Dendritic cell treated with granulocyte-macrophage colony-stimulating factor and Interleukin-4, amounts not matched to agents 40 ng/mL and 50 ng/mL, for 4 days (primary cell): ENCODE measurements at regions of chr20 and their contacts with region 1.

Region 1: DNA sequence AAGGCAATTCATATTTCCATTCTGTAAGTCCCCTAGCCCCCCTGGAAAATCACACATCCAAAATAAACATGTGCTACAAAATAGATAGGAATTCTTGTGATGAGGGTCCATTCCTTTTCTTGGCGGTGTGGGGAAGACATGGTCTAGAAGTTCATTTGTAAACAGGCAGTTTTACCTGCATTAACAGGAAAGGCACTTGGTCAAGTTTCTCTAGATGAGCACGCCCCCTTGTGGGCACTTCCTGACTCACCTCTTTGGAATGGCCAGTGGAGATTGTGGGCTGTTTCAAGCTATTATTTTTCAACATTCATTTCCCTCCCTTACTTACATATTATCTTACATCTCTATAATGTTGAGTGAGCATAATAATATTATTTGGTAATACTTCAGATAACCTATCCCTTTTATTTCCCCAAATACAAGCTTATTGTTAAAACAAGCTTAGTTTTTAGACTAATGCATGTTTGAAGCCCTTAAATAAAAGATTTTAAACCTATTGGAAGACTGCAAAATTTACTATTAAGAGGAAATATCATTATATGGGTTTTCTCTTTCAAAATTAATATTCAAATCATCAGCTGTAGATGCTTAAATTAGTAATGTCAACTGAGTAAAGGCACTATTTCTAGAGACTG is 92.1 kb downstream of the TASP1 start:
- H3K4me3 Mint-ChIP-seq: no peak overlapping the region
- H3K27ac Mint-ChIP-seq: no peak overlapping the region
- H3K4me1 Mint-ChIP-seq: no peaks in the 10 kb centered on the region
- H3K27me3 Mint-ChIP-seq: no peaks in the 10 kb centered on the region

Region 2: GRCh38 chr20:13458860-13459451 is 87.7 kb before region 1 on chr20:
- intact Hi-C with region 1: loop called (anchors 1 kb)
- H3K4me3 Mint-ChIP-seq: no peak overlapping the region
- H3K27ac Mint-ChIP-seq: no peak overlapping the region
- H3K4me1 Mint-ChIP-seq: no peaks in the 10 kb centered on the region
- H3K27me3 Mint-ChIP-seq: no peaks in the 10 kb centered on the region